Activated CD4-positive, alpha-beta memory T cell treated with anti-CD3 and anti-CD28 coated beads, Interleukin-2, amount 10 ng/mL, durations not matched to agents 7 days and 5 days (primary cell): ENCODE measurements at regions of chr3 and their contacts with region 1.

Region 1: DNA sequence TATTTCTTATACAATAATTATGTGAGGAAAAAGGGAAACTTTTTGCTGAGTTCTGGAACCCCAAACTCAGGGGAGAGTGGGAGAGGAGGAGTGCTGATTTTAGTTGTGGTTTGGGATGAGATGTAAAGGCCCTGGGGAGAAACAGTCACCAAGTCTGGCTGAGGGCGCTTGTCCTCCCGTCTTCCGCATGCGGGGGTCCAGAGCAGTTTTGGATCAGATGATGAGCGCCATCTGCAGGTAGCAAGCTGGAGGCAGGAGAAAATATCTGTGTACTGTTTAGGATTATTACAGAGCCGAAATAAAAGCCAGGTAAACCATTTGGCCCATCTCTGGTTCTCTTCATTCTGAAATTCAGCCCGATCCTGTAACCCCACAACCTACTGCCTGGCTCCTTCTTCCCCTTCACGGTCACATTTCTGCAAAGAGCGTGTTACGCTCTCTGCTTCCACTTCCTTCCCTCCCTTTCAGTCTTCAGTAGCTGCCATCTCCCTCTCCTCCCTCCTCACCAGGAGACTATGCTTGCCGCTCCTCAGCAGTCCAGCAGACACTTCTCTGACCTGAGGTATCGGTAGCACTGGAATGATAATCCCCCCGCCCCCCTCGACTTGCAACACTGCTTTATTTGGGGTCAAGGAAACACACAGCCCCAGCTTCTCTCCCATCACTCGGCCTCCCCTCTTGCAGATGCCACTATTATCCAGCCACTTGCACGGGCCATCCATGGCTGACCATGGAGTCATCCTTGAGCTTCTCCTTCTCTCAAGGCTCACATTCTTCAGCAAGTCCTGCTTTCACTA is 1.4 kb upstream of the PARP14 start:
- DNase-seq: peak; percentile 88
- H3K4me3 Mint-ChIP-seq: peak overlapping the region; percentile 96
- H3K27ac Mint-ChIP-seq: peak overlapping the region; percentile 93
- H3K4me1 Mint-ChIP-seq: peaks cover 47% of the 10 kb centered on the region
- H3K27me3 Mint-ChIP-seq: no peaks in the 10 kb centered on the region

Region 2: GRCh38 chr3:122383771-122384697 is 295.2 kb before region 1 on chr3 and contains the start of gene FAM162A:
- CTCF ChIA-PET with region 1: interaction called, 19 read pairs
- POLR2A ChIA-PET with region 1: interaction called, 14 read pairs
- DNase-seq: peak; percentile 95
- H3K4me3 Mint-ChIP-seq: peak within 1 kb of the TSS; percentile 88
- H3K27ac Mint-ChIP-seq: peak within 1 kb of the TSS; percentile 86
- H3K4me1 Mint-ChIP-seq: peaks cover 53% of the 10 kb centered on the region
- H3K27me3 Mint-ChIP-seq: no peaks in the 10 kb centered on the region
- total RNA-seq, gene FAM162A: 74.5 to 77.5 TPM

Region 3: DNA sequence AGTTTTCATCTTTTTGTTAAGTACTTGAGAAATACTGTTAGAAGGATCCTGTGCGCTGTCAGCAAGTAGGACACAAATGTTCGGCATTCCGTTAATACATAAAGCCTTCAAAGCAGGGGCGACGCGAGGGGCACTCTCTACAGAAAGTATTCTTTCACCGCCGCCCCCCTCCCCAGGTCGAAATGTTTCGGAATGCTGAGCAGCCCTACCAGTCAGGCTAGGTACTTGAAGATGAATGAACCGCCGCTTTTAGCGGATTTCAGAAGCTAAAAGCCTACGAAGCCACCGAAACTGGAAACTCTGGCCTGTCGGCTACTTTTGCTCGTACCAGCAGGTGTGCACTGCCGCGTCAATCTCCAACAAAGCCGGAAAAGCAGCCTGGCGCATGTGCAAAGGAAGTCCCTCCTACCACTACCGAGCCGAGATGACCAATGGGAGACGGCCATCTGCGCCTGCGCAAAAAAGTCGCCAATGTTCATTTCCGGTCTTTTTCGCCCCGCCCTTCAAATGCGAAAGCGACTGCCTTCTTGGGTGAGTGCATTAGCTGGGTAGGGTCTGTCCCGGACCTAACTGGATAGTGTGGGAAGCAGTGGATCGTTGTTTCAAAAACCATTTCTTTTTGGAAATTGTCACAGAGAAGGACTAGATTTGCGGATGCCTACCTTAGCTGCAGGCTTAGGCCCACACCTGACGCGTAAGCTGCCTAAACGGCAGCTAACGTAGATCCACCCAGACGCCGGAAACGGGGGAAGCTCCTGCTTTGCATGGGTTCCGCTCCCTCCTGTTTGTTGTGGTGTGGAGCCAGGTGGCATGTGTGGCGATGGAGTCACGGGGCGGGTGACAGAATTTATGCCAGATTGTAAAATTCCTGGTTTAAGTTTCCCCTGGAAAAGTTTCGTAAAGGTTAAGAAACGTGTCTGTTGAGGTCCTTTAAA is 263.3 kb before region 1 on chr3 and contains the start of gene WDR5B:
- CTCF ChIA-PET with region 1: interaction called, 20 read pairs
- POLR2A ChIA-PET with region 1: interaction called, 20 read pairs
- DNase-seq: peak; percentile 99
- H3K4me3 Mint-ChIP-seq: peak within 1 kb of the TSS; percentile 86
- H3K27ac Mint-ChIP-seq: peak within 1 kb of the TSS; percentile 93
- H3K4me1 Mint-ChIP-seq: peaks cover 57% of the 10 kb centered on the region
- H3K27me3 Mint-ChIP-seq: no peaks in the 10 kb centered on the region
- total RNA-seq, gene WDR5B: 5.5 to 5.7 TPM

Region 4: DNA sequence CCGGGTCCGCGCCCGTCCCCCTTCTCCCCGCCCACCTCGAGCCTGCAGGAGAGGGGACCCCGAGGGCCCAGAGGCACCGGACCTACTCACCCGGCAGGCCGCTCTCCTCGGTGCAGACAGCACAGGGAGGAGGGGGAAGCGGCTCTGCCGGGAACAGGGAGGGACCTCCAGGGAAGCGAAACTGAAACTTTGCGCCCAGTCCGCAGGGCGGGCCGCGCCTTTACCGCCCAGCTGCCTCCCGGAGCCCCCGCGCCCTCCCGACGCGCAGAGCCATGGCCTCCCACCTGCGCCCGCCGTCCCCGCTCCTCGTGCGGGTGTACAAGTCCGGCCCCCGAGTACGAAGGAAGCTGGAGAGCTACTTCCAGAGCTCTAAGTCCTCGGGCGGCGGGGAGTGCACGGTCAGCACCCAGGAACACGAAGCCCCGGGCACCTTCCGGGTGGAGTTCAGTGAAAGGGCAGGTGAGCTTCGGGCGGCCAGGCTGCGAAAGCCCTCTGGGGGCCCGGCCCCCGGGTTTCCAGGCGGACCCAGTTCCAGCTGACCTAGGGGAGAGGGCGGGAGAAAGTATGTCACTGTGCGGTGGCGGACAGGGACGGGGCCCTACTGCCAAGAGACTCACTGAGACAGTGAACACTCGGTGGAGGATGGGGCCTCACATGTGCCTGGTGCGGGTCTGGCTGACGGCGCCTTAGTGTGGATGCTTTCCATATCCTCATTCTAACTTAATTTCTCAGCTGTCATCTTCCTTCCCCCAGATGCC is 114.9 kb before region 1 on chr3 and contains the starts of genes DTX3L and PARP9:
- CTCF ChIA-PET with region 1: interaction called, 206 read pairs
- POLR2A ChIA-PET with region 1: interaction called, 228 read pairs
- DNase-seq: peak; percentile 91
- H3K4me3 Mint-ChIP-seq: peak within 1 kb of the TSS; percentile 98
- H3K27ac Mint-ChIP-seq: peak within 1 kb of the TSS; percentile 98
- H3K4me1 Mint-ChIP-seq: peaks cover 74% of the 10 kb centered on the region
- H3K27me3 Mint-ChIP-seq: no peaks in the 10 kb centered on the region
- total RNA-seq, gene DTX3L: 135 to 144 TPM
- total RNA-seq, gene PARP9: 151 to 157 TPM

Region 5: GRCh38 chr3:122646146-122646988 is 32.9 kb before region 1 on chr3:
- CTCF ChIA-PET with region 1: interaction called, 7 read pairs
- POLR2A ChIA-PET with region 1: interaction called, 14 read pairs
- DNase-seq: no peak
- H3K4me3 Mint-ChIP-seq: peak overlapping the region; percentile 72
- H3K27ac Mint-ChIP-seq: peak overlapping the region; percentile 79
- H3K4me1 Mint-ChIP-seq: peaks cover 50% of the 10 kb centered on the region
- H3K27me3 Mint-ChIP-seq: peaks cover 8% of the 10 kb centered on the region